ENCODE measurements at regions of chr5 and their contacts with region 1.

Region 1: GRCh38 chr5:79133657-79134451 is 22.2 kb downstream of the BHMT start:
- DNase-seq: peak; percentile 76
- H3K4me3 ChIP-seq: peak overlapping the region; percentile 30
- CTCF ChIP-seq: peak; percentile 90

Region 2: DNA sequence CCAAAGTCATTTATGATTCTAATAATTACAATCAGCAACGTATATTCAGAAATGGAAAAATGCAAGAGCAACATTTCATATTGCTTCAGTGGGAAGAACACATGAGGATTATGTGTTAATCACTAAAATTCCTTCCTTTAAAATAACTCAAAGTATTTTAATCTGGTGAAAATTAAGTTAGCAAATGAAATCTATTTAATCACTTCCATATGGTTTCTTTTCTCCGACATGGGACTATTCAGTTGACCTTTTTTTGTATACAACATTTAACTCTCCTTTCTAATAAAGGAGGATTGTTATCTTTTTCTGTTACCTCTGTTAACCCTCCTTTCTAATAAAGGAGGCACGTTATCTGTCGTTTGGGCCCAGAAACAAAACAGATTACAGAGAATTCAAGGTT is 320.2 kb after region 1 on chr5:
- in situ Hi-C with region 1: loop called (anchors 5 kb)
- DNase-seq: no peak
- H3K4me3 ChIP-seq: no peak overlapping the region
- CTCF ChIP-seq: no peak